Dendritic cell treated with granulocyte-macrophage colony-stimulating factor and Interleukin-4, amounts not matched to agents 40 ng/mL and 50 ng/mL, for 4 days (primary cell): ENCODE measurements at regions of chr12 and their contacts with region 1.

Region 1: GRCh38 chr12:116336542-116337065 is 59.1 kb upstream of the MED13L start:
- H3K4me3 Mint-ChIP-seq: no peak overlapping the region
- H3K27ac Mint-ChIP-seq: peak overlapping the region; percentile 58
- H3K4me1 Mint-ChIP-seq: peaks cover 61% of the 10 kb centered on the region
- H3K27me3 Mint-ChIP-seq: no peaks in the 10 kb centered on the region

Region 2: GRCh38 chr12:116303929-116304328 is 32.7 kb before region 1 on chr12:
- intact Hi-C with region 1: no loop called
- H3K4me3 Mint-ChIP-seq: no peak overlapping the region
- H3K27ac Mint-ChIP-seq: no peak overlapping the region
- H3K4me1 Mint-ChIP-seq: peaks cover 30% of the 10 kb centered on the region
- H3K27me3 Mint-ChIP-seq: no peaks in the 10 kb centered on the region

Region 3: DNA sequence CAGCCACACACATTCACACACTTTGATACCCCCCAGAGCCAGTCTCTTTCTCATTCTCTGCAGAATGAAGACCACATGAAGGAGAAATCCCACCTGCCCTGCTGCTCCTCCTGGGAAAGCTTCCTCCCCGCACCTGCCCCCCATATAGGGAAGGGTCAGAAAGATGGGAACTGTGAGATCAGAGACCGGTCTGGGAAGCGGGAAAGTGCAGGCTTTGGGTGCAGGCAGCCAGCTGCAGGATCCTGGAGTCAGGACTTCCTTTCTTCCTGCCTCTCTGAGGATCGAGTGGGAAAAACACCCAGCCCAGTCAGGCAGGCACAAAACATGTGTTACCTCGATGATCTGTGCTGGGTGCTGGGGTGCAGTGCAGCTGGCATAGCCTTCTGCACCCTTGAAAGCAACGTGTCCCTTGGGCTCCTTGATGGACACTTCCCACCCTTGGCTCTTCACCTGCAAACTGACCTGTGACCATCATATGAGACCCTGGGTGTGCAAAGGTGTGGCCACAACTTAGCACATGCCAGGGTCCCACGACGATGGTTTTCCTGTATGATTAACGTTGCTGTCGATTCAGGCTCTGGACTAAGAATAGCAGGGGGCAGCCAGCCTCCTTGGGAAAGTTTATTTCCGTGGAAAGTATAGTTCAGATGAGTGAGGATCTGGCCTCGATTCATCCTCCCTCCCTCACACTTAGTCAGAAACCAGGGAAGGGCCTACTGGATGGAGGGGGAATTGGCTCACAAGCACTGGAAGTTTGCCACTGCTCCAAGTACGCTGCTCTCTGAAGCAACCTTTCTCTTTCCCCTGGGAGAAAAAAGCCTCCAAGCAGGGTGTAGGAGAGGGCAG is 46.3 kb after region 1 on chr12:
- intact Hi-C with region 1: loop called (anchors 10 kb)
- H3K4me3 Mint-ChIP-seq: no peak overlapping the region
- H3K27ac Mint-ChIP-seq: no peak overlapping the region
- H3K4me1 Mint-ChIP-seq: peaks cover 56% of the 10 kb centered on the region
- H3K27me3 Mint-ChIP-seq: peaks cover 44% of the 10 kb centered on the region

Region 4: GRCh38 chr12:116406516-116406915 is 69.9 kb after region 1 on chr12:
- intact Hi-C with region 1: no loop called
- H3K4me3 Mint-ChIP-seq: no peak overlapping the region
- H3K27ac Mint-ChIP-seq: no peak overlapping the region
- H3K4me1 Mint-ChIP-seq: peaks cover 46% of the 10 kb centered on the region
- H3K27me3 Mint-ChIP-seq: peaks cover 1% of the 10 kb centered on the region